ENCODE measurements at regions of chr5 and their contacts with region 1.

Region 1: DNA sequence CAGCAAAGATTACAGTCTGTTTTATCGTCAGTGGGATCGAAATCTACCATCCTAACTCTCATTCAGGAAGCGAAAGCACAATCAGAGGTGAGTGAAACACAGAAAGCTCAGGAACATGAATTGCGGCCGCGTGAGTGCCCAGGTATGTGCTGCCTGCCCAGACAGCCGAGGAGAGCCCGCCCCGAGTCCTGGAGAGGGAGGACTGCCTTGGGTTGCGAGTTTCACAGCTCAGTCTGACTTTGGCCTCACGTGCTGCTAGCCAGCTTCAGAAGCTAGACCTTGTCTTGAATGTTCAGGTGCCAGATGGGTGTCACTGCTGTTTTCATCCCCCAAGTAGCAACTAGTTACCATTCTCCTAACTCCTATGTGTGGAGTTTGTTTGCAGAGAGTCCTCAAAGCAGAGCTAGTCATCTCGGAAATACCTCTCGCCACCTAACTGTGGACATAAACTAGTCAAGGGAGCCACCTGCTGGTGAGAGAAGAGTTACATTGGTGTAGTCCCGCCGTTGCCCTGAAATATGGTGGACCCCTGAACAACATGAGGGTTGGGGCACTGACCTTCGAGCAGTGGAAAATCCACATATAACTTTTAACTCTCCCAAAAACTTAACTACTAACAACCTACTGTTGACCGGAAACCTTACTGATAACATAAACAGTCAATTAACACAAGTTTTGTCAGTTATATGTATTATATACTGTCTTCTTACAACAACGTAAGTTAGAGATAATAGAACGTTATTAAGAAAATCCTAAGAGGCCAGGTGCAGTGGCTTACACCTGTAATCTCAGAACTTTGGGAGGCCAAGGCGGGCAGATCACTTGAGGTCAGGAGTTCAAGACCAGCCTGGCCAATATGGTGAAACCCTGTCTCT is 80.9 kb downstream of the GOLPH3 start:
- DNase-seq: peak; percentile 27 to 76 (median 65)
- ATAC-seq: peak; percentile 89
- H3K4me3 ChIP-seq: no peak overlapping the region
- H3K4me3 Mint-ChIP-seq: no peak overlapping the region
- H3K27ac ChIP-seq: no peak overlapping the region
- H3K27ac Mint-ChIP-seq: peak overlapping the region in 2 of 9 donors; percentile 60 to 71
- H3K4me1 ChIP-seq: no peaks in the 10 kb centered on the region
- H3K4me1 Mint-ChIP-seq: peaks cover 0 to 7% (median 4%) of the 10 kb centered on the region in 7 donors
- H3K27me3 ChIP-seq: no peaks in the 10 kb centered on the region
- H3K27me3 Mint-ChIP-seq: no peaks in the 10 kb centered on the region

Region 2: DNA sequence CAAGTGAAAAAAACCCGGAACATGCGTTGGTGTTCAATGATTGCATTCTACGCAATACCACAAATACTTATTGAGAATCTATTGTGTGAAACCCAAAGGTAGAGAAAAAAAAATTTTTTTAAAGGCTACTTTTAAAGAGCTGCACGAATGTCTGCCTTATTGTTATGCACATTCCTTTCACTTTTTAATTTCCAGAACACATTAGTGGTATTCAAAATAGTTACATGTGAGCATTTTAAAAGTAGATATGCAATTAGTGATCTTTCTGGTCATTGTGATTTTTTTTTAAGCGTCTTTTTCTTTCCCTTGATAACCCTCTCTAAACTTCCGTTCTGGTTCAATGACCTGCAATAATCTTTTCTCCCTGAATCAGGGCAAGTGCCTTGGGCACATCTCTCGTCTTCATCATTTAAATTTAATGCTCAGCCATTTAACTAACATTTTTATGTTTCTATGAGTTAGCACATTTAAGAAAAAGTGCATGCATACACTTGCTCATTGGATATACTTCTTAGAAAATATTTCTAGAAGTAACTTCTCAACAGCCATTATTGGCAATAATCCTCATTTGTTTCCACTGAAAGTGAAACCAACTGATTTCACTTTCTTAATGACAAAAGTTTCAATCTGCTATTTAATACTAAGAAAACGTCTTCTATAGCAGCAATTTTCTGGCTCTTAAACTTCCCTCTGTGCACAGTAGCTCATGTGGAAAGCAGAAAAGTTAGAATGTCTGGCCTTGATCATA is 819.4 kb before region 1 on chr5:
- CTCF ChIA-PET with region 1: no interaction called
- POLR2A ChIA-PET with region 1: no interaction called
- intact Hi-C with region 1: no loop called
- DNase-seq: no peak
- ATAC-seq: no peak
- H3K4me3 ChIP-seq: no peak overlapping the region
- H3K4me3 Mint-ChIP-seq: no peak overlapping the region
- H3K27ac ChIP-seq: no peak overlapping the region
- H3K27ac Mint-ChIP-seq: no peak overlapping the region
- H3K4me1 ChIP-seq: no peaks in the 10 kb centered on the region
- H3K4me1 Mint-ChIP-seq: peaks cover 0 to 5% (median 0%) of the 10 kb centered on the region in 7 donors
- H3K27me3 ChIP-seq: no peaks in the 10 kb centered on the region
- H3K27me3 Mint-ChIP-seq: peaks cover 0 to 7% (median 6%) of the 10 kb centered on the region in 5 donors

Region 3: GRCh38 chr5:31476738-31477141 is 616.4 kb before region 1 on chr5:
- CTCF ChIA-PET with region 1: no interaction called
- POLR2A ChIA-PET with region 1: no interaction called
- intact Hi-C with region 1: no loop called
- DNase-seq: no peak
- ATAC-seq: no peak
- H3K4me3 ChIP-seq: no peak overlapping the region
- H3K4me3 Mint-ChIP-seq: no peak overlapping the region
- H3K27ac ChIP-seq: no peak overlapping the region
- H3K27ac Mint-ChIP-seq: no peak overlapping the region
- H3K4me1 ChIP-seq: no peaks in the 10 kb centered on the region
- H3K4me1 Mint-ChIP-seq: no peaks in the 10 kb centered on the region
- H3K27me3 ChIP-seq: no peaks in the 10 kb centered on the region
- H3K27me3 Mint-ChIP-seq: no peaks in the 10 kb centered on the region

Region 4: GRCh38 chr5:31581498-31582099 is 511.6 kb before region 1 on chr5:
- CTCF ChIA-PET with region 1: interaction called, 8 read pairs
- POLR2A ChIA-PET with region 1: no interaction called
- intact Hi-C with region 1: loop called in 1 of 2 experiments (anchors 1 kb)
- DNase-seq: peak in 6 of 9 donors; percentile 1 to 49 (median 34)
- ATAC-seq: peak; percentile 36
- H3K4me3 ChIP-seq: no peak overlapping the region
- H3K4me3 Mint-ChIP-seq: no peak overlapping the region
- H3K27ac ChIP-seq: no peak overlapping the region
- H3K27ac Mint-ChIP-seq: no peak overlapping the region
- H3K4me1 ChIP-seq: no peaks in the 10 kb centered on the region
- H3K4me1 Mint-ChIP-seq: no peaks in the 10 kb centered on the region
- H3K27me3 ChIP-seq: no peaks in the 10 kb centered on the region
- H3K27me3 Mint-ChIP-seq: peaks cover 10 to 31% (median 17%) of the 10 kb centered on the region in 5 donors

Region 5: DNA sequence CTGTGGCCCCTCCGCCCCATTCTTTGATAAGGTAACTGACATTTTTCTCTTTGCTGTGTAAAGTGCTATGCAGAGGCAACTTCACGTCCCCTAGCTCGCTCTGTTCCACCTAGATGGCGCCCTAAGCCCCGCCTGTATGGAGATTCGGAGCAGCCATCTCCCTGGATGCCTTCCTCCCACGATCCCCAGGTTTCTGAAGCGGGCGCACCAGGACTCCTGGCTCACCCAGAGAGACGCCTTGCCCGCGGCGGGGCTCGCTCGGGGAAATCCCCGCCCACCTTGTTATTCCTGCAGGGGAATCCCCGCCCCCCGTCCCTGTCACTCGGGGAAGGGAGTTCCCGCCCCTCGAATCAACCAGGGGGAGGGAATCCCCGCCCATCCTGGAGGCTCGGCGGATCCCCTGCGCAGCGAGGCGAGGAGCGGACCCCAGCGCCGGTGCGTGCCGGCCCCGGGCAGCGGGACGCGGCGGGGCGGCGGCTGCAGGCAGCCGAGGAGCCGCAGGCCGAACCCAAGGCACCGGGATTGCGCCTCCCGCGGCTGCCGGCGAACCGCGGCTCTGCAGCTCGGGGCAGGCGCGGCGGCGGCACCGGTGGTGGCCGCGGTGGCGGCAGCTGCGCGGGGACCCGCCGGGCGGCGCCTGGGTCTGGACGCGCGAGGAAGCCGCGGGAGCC is 454.3 kb before region 1 on chr5 and contains the start of gene PDZD2:
- CTCF ChIA-PET with region 1: no interaction called
- POLR2A ChIA-PET with region 1: no interaction called
- intact Hi-C with region 1: loop called in 1 of 2 experiments (anchors 5 kb)
- DNase-seq: peak; percentile 38 to 81 (median 60)
- ATAC-seq: peak; percentile 79
- H3K4me3 ChIP-seq: peak within 1 kb of the TSS; percentile 62
- H3K4me3 Mint-ChIP-seq: peak within 1 kb of the TSS in 9 of 10 donors; percentile 83 to 90 (median 89)
- H3K27ac ChIP-seq: peak within 1 kb of the TSS; percentile 20
- H3K27ac Mint-ChIP-seq: peak within 1 kb of the TSS in 8 of 9 donors; percentile 34 to 72 (median 55)
- H3K4me1 ChIP-seq: peaks cover 0 to 6% of the 10 kb centered on the region in 2 donors
- H3K4me1 Mint-ChIP-seq: peaks cover 0 to 20% (median 10%) of the 10 kb centered on the region in 7 donors
- H3K27me3 ChIP-seq: no peaks in the 10 kb centered on the region
- H3K27me3 Mint-ChIP-seq: peaks cover 0 to 28% (median 14%) of the 10 kb centered on the region in 5 donors
- total RNA-seq, gene PDZD2: 1.1 to 2.7 (median 1.9) TPM in 4 of 5 experiments, not detected in the other

Region 6: GRCh38 chr5:31800351-31800750 is 292.8 kb before region 1 on chr5:
- CTCF ChIA-PET with region 1: no interaction called
- POLR2A ChIA-PET with region 1: no interaction called
- intact Hi-C with region 1: no loop called
- DNase-seq: no peak
- ATAC-seq: no peak
- H3K4me3 ChIP-seq: no peak overlapping the region
- H3K4me3 Mint-ChIP-seq: no peak overlapping the region
- H3K27ac ChIP-seq: no peak overlapping the region
- H3K27ac Mint-ChIP-seq: no peak overlapping the region
- H3K4me1 ChIP-seq: no peaks in the 10 kb centered on the region
- H3K4me1 Mint-ChIP-seq: peaks cover 0 to 2% (median 0%) of the 10 kb centered on the region in 7 donors
- H3K27me3 ChIP-seq: no peaks in the 10 kb centered on the region
- H3K27me3 Mint-ChIP-seq: peaks cover 0 to 19% (median 10%) of the 10 kb centered on the region in 5 donors

Region 7: GRCh38 chr5:34007621-34008600 is 1914.7 kb after region 1 on chr5 and contains the start of gene AMACR:
- CTCF ChIA-PET with region 1: no interaction called
- POLR2A ChIA-PET with region 1: no interaction called
- intact Hi-C with region 1: no loop called
- DNase-seq: peak; percentile 73 to 91 (median 81)
- ATAC-seq: peak; percentile 95
- H3K4me3 ChIP-seq: peak within 1 kb of the TSS; percentile 85
- H3K4me3 Mint-ChIP-seq: peak within 1 kb of the TSS; percentile 79 to 98 (median 94)
- H3K27ac ChIP-seq: peak within 1 kb of the TSS; percentile 83
- H3K27ac Mint-ChIP-seq: peak within 1 kb of the TSS; percentile 87 to 97 (median 96)
- H3K4me1 ChIP-seq: peaks cover 9 to 18% of the 10 kb centered on the region in 2 donors
- H3K4me1 Mint-ChIP-seq: peaks cover 23 to 39% (median 32%) of the 10 kb centered on the region in 7 donors
- H3K27me3 ChIP-seq: no peaks in the 10 kb centered on the region
- H3K27me3 Mint-ChIP-seq: no peaks in the 10 kb centered on the region
- total RNA-seq, gene AMACR: 2.7 to 8.3 (median 7.3) TPM